Ascending aorta (tissue), 2 donors: ENCODE measurements at regions of chr1 and their contacts with region 1.

Region 1: GRCh38 chr1:119954476-119955422 is 58.4 kb upstream of the ADAM30 start:
- DNase-seq: no peak
- H3K4me3 ChIP-seq: no peak overlapping the region
- H3K27ac ChIP-seq: peak overlapping the region; percentile 62 to 72
- H3K4me1 ChIP-seq: peaks cover 0 to 42% of the 10 kb centered on the region in 2 donors
- H3K27me3 ChIP-seq: no peaks in the 10 kb centered on the region
- CTCF ChIP-seq: no peak

Region 2: GRCh38 chr1:119367427-119368124 is 587.2 kb before region 1 on chr1:
- intact Hi-C with region 1: no loop called
- DNase-seq: no peak
- H3K4me3 ChIP-seq: no peak overlapping the region
- H3K27ac ChIP-seq: no peak overlapping the region
- H3K4me1 ChIP-seq: no peaks in the 10 kb centered on the region
- H3K27me3 ChIP-seq: no peaks in the 10 kb centered on the region
- CTCF ChIP-seq: peak in 2 of 3 experiments; percentile 46 to 63

Region 3: GRCh38 chr1:119743781-119744597 is 210.8 kb before region 1 on chr1:
- intact Hi-C with region 1: no loop called
- DNase-seq: no peak
- H3K4me3 ChIP-seq: no peak overlapping the region
- H3K27ac ChIP-seq: peak overlapping the region in 1 of 2 donors; percentile 66
- H3K4me1 ChIP-seq: peaks cover 4% of the 10 kb centered on the region in 2 donors
- H3K27me3 ChIP-seq: no peaks in the 10 kb centered on the region
- CTCF ChIP-seq: peak; percentile 38 to 79 (median 74)

Region 4: DNA sequence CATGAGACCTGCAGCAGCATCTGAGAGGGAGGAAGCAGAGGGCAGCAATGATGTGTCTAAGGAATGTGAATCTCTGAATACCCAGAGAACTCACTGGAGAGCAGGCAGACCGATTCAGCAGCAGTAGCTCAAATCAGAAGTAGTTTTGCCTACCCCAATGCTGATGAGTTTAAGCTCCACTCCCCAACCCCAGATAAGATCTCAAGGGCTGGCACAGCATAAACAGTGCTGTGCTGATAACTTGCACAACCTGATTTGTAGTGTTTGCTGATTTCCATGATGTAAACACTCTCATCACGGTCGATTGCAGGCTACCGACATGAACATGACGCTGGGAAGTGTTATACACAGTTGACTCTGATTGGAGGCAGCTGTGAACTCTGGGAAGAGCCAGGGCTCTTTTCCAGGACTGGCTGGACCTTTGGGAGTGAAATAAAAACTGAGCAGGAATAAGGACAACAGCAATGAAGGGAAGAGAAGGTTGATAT is 174.8 kb before region 1 on chr1:
- intact Hi-C with region 1: no loop called
- DNase-seq: no peak
- H3K4me3 ChIP-seq: no peak overlapping the region
- H3K27ac ChIP-seq: no peak overlapping the region
- H3K4me1 ChIP-seq: no peaks in the 10 kb centered on the region
- H3K27me3 ChIP-seq: no peaks in the 10 kb centered on the region
- CTCF ChIP-seq: no peak

Region 5: GRCh38 chr1:119853155-119853554 is 101.6 kb before region 1 on chr1:
- intact Hi-C with region 1: no loop called
- DNase-seq: no peak
- H3K4me3 ChIP-seq: no peak overlapping the region
- H3K27ac ChIP-seq: no peak overlapping the region
- H3K4me1 ChIP-seq: no peaks in the 10 kb centered on the region
- H3K27me3 ChIP-seq: no peaks in the 10 kb centered on the region
- CTCF ChIP-seq: no peak

Region 6: DNA sequence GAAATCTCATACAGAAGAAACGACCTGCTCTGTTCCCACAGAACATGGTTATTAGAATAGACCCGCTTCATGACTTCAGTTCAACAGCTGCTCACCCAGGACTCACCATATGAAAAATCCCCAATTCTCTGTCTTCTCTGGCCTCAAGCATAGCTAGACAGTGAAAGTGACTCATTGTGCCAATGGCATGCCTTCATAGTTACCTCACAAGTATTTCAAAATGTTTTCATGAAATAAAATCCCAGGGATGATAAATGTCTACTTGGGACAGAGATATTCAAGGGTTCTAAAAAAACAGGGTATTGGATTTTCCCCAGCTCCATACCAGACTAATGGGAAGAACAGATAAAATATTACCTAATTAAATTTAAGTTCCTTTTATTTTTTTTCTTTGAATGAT is 32.4 kb after region 1 on chr1:
- intact Hi-C with region 1: loop called (anchors 5 kb)
- DNase-seq: peak in 1 of 2 donors; percentile 68
- H3K4me3 ChIP-seq: no peak overlapping the region
- H3K27ac ChIP-seq: peak overlapping the region; percentile 69 to 70
- H3K4me1 ChIP-seq: peaks cover 12 to 21% of the 10 kb centered on the region in 2 donors
- H3K27me3 ChIP-seq: no peaks in the 10 kb centered on the region
- CTCF ChIP-seq: no peak

Region 7: DNA sequence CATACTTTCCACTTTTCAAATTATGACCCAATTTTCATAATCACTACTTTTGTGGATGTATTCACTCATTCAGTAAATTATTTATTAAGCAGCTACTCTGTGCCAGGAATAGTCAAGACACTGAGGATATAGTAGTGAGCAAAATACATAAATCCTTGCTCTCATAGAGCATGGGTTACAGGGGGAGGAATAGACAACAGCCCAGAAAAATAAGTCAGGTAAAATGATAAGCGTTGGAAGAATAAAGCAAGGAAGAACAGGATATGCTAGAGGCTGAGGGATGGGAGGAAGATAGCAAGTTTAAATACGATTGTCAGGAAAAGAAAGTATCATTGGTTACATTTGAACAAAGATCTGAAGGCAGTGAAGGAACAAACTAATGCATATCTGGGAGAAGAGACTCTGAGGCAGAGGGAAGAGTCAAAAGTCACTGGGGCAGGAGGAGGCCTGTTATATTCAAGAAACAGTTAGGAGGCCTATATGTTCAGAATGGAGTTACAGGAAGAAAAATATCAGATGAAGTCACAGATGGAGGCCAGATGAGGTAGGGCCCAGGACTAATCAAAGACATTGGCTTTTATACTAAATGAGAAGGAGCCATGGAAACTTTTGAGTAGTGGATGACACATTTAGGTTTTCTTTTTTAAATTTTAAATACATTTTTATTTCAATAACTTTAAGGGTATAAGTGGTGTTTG is 178.6 kb after region 1 on chr1:
- intact Hi-C with region 1: loop called (anchors 5 kb)
- DNase-seq: no peak
- H3K4me3 ChIP-seq: no peak overlapping the region
- H3K27ac ChIP-seq: no peak overlapping the region
- H3K4me1 ChIP-seq: peaks cover 0 to 6% of the 10 kb centered on the region in 2 donors
- H3K27me3 ChIP-seq: no peaks in the 10 kb centered on the region
- CTCF ChIP-seq: no peak